SK-N-SH (cell line): ENCODE measurements at regions of chr19 and their contacts with region 1.

Region 1: DNA sequence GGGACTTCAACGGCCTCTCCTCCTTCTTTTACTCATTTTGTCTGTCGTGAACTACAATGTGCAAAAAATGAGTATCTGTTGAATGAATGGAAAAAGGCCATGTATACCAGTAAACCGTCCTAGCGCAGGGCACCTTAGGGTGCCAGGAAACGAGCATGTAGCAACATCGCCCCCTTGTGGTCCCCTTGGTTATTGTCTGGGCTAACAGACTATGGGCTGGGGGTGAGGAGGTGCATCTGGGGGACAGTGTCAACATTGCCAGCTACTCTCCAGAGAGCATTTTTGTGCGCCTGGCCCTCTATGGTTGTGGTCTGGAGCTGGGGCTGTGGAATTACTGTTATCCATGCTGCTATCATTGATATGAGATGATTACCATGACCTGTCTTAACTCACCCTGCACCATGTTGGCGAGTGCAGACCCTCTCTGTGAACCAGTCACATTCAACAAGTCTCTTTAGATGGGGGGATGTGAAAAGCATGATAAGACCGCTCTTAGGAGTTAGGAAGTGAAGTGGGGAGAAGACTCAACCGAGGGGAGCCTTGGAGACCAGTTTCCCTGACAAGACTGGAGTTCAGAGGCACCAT is 22.8 kb upstream of the SIGLEC11 start:
- DNase-seq: peak; percentile 79
- H3K4me3 ChIP-seq: no peak overlapping the region; a peak in 1 of 4 replicates
- H3K27ac ChIP-seq: no peak overlapping the region
- H3K4me1 ChIP-seq: no peaks in the 10 kb centered on the region
- H3K27me3 ChIP-seq: no peaks in the 10 kb centered on the region
- CTCF ChIP-seq: peak; percentile 91
- EP300 ChIP-seq: no peak
- RAD21 ChIP-seq: peak; percentile 79

Region 2: DNA sequence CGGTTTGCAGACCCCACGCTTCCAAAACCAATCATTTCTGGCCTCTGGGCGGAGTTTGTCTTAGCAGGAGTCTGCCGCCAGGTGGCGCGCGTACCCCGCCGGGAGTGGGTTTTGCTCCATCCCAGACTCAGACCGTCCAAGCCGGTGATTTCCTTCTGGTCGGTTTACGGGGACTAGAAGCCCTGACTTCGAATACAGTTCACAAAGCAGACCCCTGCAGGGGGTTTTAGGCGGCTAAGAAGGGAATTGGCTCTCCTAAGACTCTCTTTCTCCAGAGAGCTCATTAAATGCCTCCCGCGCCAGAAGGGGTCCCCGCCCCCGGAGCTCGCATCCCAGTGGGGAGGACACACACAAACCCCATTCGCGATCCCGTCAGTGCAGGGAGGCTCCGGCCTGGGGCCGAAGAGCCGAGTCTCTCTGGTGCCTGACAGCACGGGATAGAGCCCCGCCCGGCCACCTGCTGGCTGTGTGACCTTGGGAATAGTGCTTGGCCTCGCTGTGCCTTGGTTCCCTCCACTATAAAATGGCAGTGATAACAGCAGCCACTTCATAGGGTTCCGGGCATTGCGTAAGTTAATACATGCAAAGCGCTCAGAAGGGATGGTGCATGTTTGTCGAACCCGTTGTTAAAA is 45.9 kb before region 1 on chr19:
- CTCF ChIA-PET with region 1: interaction called, 94 read pairs
- POLR2A ChIA-PET with region 1: no interaction called
- DNase-seq: peak; percentile 91
- H3K4me3 ChIP-seq: peak overlapping the region; percentile 34 to 56
- H3K27ac ChIP-seq: no peak overlapping the region
- H3K4me1 ChIP-seq: peaks cover 0 to 3% of the 10 kb centered on the region in 2 experiments; a peak in 1 of 4 replicates
- H3K27me3 ChIP-seq: no peaks in the 10 kb centered on the region; the same call in 1 of the 2 replicates
- CTCF ChIP-seq: peak; percentile 96
- EP300 ChIP-seq: no peak
- RAD21 ChIP-seq: peak; percentile 95

Region 3: GRCh38 chr19:49954079-49954829 is 29.5 kb before region 1 on chr19:
- CTCF ChIA-PET with region 1: interaction called, 13 read pairs
- POLR2A ChIA-PET with region 1: no interaction called
- DNase-seq: no peak
- H3K4me3 ChIP-seq: no peak overlapping the region
- H3K27ac ChIP-seq: no peak overlapping the region
- H3K4me1 ChIP-seq: no peaks in the 10 kb centered on the region
- H3K27me3 ChIP-seq: peaks cover 67% of the 10 kb centered on the region
- CTCF ChIP-seq: no peak
- EP300 ChIP-seq: no peak
- RAD21 ChIP-seq: no peak

Region 4: GRCh38 chr19:49997709-49998108 is 14.0 kb after region 1 on chr19:
- CTCF ChIA-PET with region 1: interaction called, 15 read pairs
- POLR2A ChIA-PET with region 1: no interaction called
- DNase-seq: peak; percentile 78
- H3K4me3 ChIP-seq: no peak overlapping the region
- H3K27ac ChIP-seq: no peak overlapping the region
- H3K4me1 ChIP-seq: no peaks in the 10 kb centered on the region
- H3K27me3 ChIP-seq: no peaks in the 10 kb centered on the region
- CTCF ChIP-seq: no peak
- EP300 ChIP-seq: no peak
- RAD21 ChIP-seq: no peak